Ascending aorta (tissue), 2 donors: ENCODE measurements at regions of chr6 and their contacts with region 1.

Region 1: DNA sequence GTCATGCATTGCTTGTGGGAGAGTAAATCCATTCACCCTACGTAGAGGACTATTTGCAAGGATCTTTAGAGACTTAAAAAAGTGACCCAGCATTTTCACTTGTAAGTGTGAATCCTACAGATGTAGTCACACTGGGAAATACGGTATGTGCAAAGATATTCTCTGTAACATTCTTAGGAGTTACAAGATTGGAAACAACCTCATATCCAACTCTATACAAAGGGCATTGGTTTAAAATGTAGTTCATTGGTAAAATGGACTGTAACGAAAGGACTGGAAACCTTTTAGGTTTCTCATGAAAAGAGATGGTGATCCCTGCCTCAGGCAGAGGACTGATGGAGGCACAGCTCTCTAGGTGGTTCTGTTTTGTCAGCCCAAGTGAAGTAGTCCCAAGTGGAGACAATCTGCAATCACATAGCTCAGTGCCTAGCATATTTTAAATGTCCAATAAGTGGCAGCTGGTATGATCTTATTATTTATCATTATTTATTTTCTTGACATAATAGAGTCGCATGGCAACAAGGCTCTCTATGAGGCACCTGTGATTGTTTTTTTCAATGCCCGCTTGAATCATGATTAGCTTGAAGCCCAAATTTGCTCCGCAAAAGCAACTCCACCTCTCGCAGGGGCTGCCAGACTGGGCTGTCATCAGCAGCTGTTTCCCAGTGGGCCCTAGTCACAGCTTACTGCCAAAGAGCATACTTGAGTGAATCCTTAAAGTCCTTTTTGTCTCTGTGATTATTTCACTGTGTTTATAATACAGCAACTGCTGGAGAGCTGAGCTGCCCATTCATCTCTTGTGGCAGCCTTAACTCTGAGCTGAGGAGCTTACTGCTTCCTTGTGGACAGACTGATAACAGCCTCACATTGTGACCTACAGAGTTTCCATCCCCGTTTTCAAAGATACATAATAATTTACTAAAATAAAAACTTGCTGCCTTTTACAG is 19.8 kb upstream of the ENPP1 start:
- DNase-seq: no peak
- H3K4me3 ChIP-seq: no peak overlapping the region
- H3K27ac ChIP-seq: no peak overlapping the region
- H3K4me1 ChIP-seq: peaks cover 0 to 5% of the 10 kb centered on the region in 2 donors
- H3K27me3 ChIP-seq: no peaks in the 10 kb centered on the region
- CTCF ChIP-seq: peak; percentile 25 to 57 (median 31)

Region 2: DNA sequence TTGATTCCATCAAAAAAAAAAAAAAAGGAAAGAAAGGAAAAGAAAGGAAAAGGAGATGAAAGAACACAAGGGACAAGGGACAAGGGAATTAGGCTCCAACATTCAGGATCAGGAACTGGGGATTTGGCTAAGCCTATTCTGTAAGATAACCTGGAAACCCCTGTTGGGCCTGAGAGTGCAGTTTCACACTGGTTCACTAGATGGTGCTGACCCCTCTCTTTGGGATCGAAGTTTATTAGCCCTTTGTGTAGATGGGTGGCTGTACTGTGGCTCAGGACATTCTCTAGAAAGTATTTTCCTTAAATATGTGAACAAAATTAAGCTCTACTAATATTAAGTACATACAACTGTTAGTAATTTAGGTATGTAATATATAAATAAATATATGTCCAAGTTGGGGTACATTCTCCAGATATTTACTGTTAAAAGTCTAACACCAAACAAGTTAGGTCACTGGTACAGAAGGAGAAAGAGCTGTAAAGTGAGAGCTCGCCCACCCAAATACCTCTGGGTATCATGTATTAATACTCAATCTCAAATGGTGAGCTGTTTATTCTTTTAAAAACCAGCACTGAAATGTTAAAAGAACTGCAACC is 93.1 kb before region 1 on chr6:
- intact Hi-C with region 1: loop called (anchors 5 kb)
- DNase-seq: peak in 1 of 2 donors; percentile 68
- H3K4me3 ChIP-seq: no peak overlapping the region
- H3K27ac ChIP-seq: no peak overlapping the region
- H3K4me1 ChIP-seq: no peaks in the 10 kb centered on the region
- H3K27me3 ChIP-seq: no peaks in the 10 kb centered on the region
- CTCF ChIP-seq: peak; percentile 69 to 93 (median 84)

Region 3: GRCh38 chr6:131728296-131728939 is 59.6 kb before region 1 on chr6:
- intact Hi-C with region 1: no loop called
- DNase-seq: no peak
- H3K4me3 ChIP-seq: no peak overlapping the region
- H3K27ac ChIP-seq: no peak overlapping the region
- H3K4me1 ChIP-seq: no peaks in the 10 kb centered on the region
- H3K27me3 ChIP-seq: no peaks in the 10 kb centered on the region
- CTCF ChIP-seq: no peak

Region 4: DNA sequence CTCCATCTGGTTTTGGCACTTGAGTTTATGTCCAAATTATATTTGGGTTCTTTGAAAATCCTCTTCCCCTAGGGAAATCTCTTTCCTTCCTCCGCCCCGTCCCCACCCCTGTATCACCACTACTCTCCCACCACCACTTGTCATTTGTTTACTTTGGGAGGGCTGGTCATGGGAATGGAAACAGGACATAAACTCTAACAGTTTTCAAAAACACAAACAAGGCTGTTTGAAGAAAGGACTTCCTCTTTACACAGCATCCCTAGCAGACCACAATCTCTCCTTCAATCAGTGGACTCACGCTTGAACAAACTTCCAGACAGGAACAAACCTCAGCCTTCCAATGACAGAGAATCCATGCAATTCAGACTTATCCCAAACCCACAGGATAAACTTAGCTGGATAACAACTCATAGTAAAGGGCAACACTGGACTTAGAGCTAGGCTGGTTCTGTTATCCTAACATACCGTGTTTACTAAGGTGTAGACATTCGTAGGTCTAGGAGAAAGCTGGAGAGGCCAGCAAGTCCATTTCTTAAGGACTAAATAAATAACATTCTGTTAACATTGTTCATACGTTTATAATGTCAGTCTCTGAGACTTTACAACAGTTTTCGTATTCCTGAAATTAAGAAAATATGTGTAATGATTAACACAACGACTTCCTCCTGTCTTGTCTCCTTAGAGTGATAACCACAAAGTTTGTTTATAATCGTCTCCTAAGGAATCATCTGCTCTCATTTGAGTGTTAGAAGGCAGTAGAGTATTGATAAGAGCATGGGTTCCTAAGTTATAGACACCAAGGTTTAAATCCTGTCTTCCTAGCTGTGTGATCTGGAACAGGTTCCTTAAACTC is 33.1 kb before region 1 on chr6:
- intact Hi-C with region 1: loop called (anchors 5 kb)
- DNase-seq: no peak
- H3K4me3 ChIP-seq: no peak overlapping the region
- H3K27ac ChIP-seq: no peak overlapping the region
- H3K4me1 ChIP-seq: peaks cover 2 to 10% of the 10 kb centered on the region in 2 donors
- H3K27me3 ChIP-seq: no peaks in the 10 kb centered on the region
- CTCF ChIP-seq: no peak